ENCODE measurements at regions of chr3 and their contacts with region 1.

Region 1: DNA sequence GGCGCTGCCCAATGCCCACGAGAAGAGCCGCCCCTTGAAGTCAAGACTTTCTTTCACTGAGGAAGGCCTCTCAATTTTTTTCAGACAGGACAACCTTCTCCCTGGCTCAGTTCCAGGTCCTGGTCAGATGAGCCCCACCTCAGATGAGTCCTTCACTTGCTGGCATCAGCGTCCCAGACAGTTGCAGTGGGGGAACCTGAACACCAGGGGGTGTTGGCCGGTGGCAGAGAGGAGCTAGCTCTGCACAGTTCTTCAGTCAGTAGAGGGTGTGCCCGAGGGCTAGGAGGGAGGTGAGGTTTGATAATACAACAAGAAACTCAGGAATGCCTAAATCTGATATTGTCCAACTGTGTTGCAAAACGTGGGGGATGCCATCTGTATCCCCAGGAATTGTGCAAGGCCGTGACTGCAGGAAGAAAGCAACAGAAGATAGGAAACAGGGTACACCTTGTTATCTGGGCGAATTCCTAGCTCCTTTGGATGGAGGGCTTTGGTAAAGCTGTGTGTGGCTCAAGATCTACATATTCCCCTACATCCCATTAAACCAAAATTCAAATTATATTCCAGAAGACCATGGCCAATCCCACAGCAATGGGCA is 34.3 kb downstream of the CCR3 start:
- DNase-seq: peak; percentile 41 to 79 (median 75)
- ATAC-seq: peak; percentile 66 to 69
- H3K4me3 ChIP-seq: no peak overlapping the region
- H3K27ac ChIP-seq: no peak overlapping the region
- H3K4me1 ChIP-seq: no peaks in the 10 kb centered on the region
- H3K27me3 ChIP-seq: peaks cover 3% of the 10 kb centered on the region

Region 2: GRCh38 chr3:46065294-46065721 is 211.3 kb before region 1 on chr3:
- intact Hi-C with region 1: no loop called
- DNase-seq: peak in 1 of 3 donors; percentile 57
- ATAC-seq: peak; percentile 51 to 65
- H3K4me3 ChIP-seq: no peak overlapping the region
- H3K27ac ChIP-seq: peak overlapping the region; percentile 70
- H3K4me1 ChIP-seq: peaks cover 8% of the 10 kb centered on the region
- H3K27me3 ChIP-seq: no peaks in the 10 kb centered on the region

Region 3: GRCh38 chr3:46368569-46368968 is 92.0 kb after region 1 on chr3:
- intact Hi-C with region 1: loop called in 1 of 4 experiments (anchors 10 kb)
- DNase-seq: peak; percentile 58 to 79 (median 75)
- ATAC-seq: peak; percentile 78 to 80
- H3K4me3 ChIP-seq: no peak overlapping the region
- H3K27ac ChIP-seq: no peak overlapping the region
- H3K4me1 ChIP-seq: no peaks in the 10 kb centered on the region
- H3K27me3 ChIP-seq: no peaks in the 10 kb centered on the region

Region 4: GRCh38 chr3:46427916-46428833 is 151.6 kb after region 1 on chr3:
- intact Hi-C with region 1: loop called in 1 of 4 experiments (anchors 5 kb)
- DNase-seq: no peak
- ATAC-seq: peak; percentile 89 to 94
- H3K4me3 ChIP-seq: no peak overlapping the region
- H3K27ac ChIP-seq: no peak overlapping the region
- H3K4me1 ChIP-seq: no peaks in the 10 kb centered on the region
- H3K27me3 ChIP-seq: no peaks in the 10 kb centered on the region

Region 5: DNA sequence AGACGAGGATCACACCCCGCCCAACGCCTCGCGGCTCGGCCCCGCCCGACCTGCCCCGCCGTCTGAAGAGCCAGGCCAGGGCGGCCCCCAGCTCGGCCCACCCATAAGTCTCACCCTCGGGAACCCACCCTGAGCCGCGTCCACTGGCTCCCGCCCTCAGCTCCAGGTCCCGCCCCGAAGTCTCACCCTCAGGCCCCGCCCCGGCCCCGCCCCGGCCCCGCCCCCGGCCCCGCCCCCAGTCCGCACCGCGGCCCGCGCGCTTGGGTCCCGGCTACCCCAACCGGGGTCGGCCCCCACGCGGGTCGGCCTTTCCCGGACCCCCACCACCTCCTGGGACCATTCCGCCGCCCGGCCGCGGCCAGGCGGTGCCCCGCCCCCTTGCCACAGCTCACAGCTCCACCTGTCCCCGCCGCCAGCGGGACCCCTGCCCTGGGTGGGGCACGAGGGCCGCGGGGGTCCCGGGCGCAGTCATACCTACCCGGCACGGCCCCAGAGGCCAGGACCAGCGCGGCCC is 1301.6 kb after region 1 on chr3:
- intact Hi-C with region 1: no loop called
- DNase-seq: peak; percentile 43 to 76 (median 73)
- ATAC-seq: peak; percentile 77 to 81
- H3K4me3 ChIP-seq: peak overlapping the region; percentile 90
- H3K27ac ChIP-seq: no peak overlapping the region
- H3K4me1 ChIP-seq: no peaks in the 10 kb centered on the region
- H3K27me3 ChIP-seq: no peaks in the 10 kb centered on the region

Measured in right cardiac atrium (tissue), 5 donors.